Transverse colon (tissue), 4 donors: ENCODE measurements at regions of chr3 and their contacts with region 1.

Region 1: DNA sequence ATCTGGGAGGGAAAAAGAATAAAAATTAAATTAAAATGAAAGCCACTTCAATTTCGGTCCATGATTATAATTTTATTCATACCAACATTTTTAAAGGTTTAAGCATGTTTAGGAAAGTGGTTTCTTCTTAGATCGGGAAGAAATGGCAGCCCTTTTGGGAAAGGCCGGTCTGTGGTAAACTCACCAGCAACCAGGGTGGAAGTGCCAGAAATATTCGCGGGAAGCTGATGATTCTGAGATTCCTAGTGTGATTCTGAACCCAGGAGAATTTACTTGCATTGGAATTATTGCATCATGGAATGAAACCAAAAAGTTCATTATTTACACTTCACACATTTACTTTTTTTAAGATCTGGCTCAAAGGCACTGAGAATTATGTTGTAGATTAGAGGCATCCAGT is 97.1 kb upstream of the CCNL1 start:
- DNase-seq: no peak
- H3K4me3 ChIP-seq: no peak overlapping the region
- H3K27ac ChIP-seq: no peak overlapping the region
- H3K4me1 ChIP-seq: no peaks in the 10 kb centered on the region
- H3K27me3 ChIP-seq: no peaks in the 10 kb centered on the region
- CTCF ChIP-seq: no peak
- EP300 ChIP-seq: no peak
- POLR2A ChIP-seq: no peak

Region 2: DNA sequence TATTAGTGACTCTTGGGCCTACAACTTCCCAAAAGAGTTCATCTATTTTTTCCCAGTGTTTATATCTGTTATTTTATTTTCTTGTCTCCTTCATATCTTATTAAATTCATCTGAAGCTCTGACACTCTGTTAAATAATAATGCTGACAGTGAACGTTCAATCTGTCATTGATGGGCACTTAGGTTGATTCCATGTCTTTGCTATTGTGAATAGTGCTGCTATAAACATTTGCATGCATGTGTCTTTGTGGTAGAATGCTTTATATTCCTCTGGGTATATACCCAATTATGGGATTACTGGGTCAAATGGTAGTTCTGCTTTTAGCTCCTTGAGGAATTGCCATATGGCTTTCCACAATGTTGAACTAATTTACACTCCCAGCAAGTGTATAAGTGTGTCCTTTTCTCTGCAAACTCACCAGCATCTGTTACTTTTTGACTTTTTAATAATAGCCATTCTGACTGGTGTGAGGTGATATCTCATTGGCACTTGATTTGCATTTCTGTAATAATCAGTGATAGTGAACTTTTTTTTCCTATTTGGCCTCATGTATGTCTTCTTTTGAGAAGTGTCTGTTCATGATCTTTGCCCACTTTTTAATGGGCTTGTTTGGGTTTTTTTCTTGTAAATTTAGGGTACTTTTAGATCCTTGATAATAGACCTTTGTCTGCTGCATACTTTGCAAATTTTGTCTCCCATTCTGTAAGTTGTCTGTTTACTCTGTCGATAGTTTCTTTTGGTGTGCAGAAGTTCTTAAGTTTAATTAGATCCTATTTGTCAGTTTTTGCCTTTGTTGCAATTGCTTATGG is 308.5 kb before region 1 on chr3:
- in situ Hi-C with region 1: no loop called
- intact Hi-C with region 1: no loop called
- DNase-seq: no peak
- H3K4me3 ChIP-seq: no peak overlapping the region
- H3K27ac ChIP-seq: no peak overlapping the region
- H3K4me1 ChIP-seq: no peaks in the 10 kb centered on the region
- H3K27me3 ChIP-seq: no peaks in the 10 kb centered on the region
- CTCF ChIP-seq: no peak
- EP300 ChIP-seq: no peak
- POLR2A ChIP-seq: no peak

Region 3: DNA sequence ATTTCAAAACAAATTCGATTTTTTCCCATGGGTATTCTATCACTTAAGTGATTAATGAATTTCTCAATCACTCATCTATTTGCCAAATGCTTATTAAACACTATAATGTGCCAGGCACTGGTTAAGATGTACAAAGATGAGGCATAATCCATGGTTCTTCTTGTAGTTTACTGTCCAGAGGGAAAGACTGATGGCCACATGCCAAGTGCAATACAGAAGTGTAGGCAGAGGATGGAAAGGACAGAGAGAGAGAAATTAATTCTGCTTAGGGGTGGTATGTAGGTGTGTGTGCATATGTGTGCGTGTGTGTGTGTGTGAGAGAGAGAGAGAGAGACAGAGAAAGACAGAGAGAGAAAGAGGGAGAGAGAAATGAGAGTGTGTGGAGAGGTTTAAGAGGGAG is 23.7 kb after region 1 on chr3:
- in situ Hi-C with region 1: no loop called
- intact Hi-C with region 1: loop called (anchors 1 kb)
- DNase-seq: no peak
- H3K4me3 ChIP-seq: no peak overlapping the region
- H3K27ac ChIP-seq: no peak overlapping the region
- H3K4me1 ChIP-seq: no peaks in the 10 kb centered on the region
- H3K27me3 ChIP-seq: no peaks in the 10 kb centered on the region
- CTCF ChIP-seq: no peak
- EP300 ChIP-seq: no peak
- POLR2A ChIP-seq: no peak